ENCODE measurements at regions of chr10 and their contacts with region 1.

Region 1: DNA sequence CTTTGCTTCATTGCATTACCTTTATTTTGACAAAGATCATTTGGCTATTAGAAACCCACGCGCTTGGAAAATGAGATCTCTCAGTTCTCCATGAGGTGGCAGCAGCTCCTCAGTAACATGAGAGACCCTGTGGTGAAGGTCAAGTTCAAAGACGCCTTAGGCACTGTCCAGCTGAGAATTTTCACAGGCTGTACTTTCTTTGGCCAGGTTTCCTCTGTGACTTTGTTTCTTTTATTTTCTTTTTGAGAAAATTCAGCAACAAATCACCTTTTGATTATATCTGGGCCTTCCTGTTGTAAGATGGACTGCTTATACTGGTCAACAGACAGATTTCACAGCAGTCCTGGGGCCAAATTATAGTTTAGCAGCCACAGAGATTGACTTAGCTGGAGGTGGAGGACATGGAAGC is 54.5 kb downstream of the RAB18 start:
- ATAC-seq: peak; percentile 37 to 73 (median 52)
- H3K4me3 ChIP-seq: no peak overlapping the region
- H3K27ac ChIP-seq: no peak overlapping the region
- H3K4me1 ChIP-seq: no peaks in the 10 kb centered on the region

Region 2: GRCh38 chr10:28179006-28179742 is 620.6 kb after region 1 on chr10:
- in situ Hi-C with region 1: loop called in 2 of 9 experiments (anchors 25 kb)
- ATAC-seq: peak in 3 of 8 experiments; percentile 35 to 61 (median 53)
- H3K4me3 ChIP-seq: no peak overlapping the region
- H3K27ac ChIP-seq: no peak overlapping the region
- H3K4me1 ChIP-seq: no peaks in the 10 kb centered on the region

Measured in motor neuron (in vitro differentiated cells).